ENCODE measurements at regions of chr2 and their contacts with region 1.

Region 1: GRCh38 chr2:39227628-39228412 is 15.9 kb downstream of the CDKL4 start:
- DNase-seq: peak; percentile 90

Region 2: GRCh38 chr2:38947240-38948239 is 280.3 kb before region 1 on chr2:
- intact Hi-C with region 1: loop called (anchors 2 kb)
- DNase-seq: no peak

Region 3: GRCh38 chr2:39059366-39059952 is 168.4 kb before region 1 on chr2:
- intact Hi-C with region 1: loop called (anchors 1 kb)
- DNase-seq: no peak

Region 4: GRCh38 chr2:39124000-39124745 is 103.6 kb before region 1 on chr2:
- intact Hi-C with region 1: loop called (anchors 2 kb)
- DNase-seq: peak; percentile 98